Cardiac septum (tissue), 1 donor: ENCODE measurements at regions of chr2 and their contacts with region 1.

Region 1: GRCh38 chr2:221517696-221518151 is 54.4 kb downstream of the EPHA4 start:
- DNase-seq: peak; percentile 75

Region 2: DNA sequence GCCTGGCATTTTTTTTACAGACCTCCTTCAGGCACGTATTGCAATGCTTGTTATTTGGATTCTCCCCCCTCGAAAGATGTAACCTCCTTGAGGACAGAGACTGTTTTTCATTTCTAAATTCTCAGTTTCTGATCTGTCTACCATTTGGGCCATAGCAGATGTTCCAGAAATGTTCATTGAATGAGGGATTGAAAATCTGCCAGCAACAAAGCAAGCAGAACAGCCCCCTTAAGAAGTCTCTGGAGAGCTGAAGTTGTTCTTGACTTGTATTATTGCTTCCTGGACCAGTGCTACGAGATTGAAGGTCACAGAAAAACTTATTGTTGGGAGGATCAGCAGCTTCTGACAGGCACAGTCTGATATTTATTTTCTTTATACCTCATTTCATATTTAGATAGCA is 301.1 kb before region 1 on chr2:
- intact Hi-C with region 1: no loop called
- DNase-seq: no peak

Region 3: DNA sequence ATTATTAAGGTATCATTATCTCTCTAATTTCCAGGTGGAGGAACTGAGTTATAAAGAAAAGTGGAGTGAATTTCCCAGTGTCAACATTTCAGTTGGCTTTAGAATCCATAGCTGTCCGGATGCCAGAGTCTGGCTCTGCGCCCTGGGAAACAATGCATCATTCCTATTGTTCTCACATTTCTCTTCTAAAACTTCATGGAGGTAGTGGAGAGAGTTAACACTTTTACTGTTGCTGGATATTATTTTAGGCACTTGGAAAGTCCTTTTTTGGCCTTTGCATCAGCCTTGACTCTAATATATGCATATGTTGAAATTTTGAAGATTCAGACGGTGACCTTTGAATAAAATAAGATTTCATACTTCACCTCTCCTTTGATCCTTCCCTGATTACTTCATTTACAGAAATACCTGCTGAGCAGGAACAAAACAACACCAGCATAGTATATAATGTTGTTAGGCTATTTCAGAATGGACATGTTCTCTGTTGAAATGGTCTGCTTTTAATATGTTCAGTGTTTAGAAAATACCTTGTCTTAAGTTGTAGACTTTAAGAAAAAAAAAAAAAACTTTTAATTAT is 94.4 kb before region 1 on chr2:
- intact Hi-C with region 1: loop called (anchors 5 kb)
- DNase-seq: no peak

Region 4: GRCh38 chr2:221554769-221555493 is 37.2 kb after region 1 on chr2:
- intact Hi-C with region 1: no loop called
- DNase-seq: no peak

Region 5: DNA sequence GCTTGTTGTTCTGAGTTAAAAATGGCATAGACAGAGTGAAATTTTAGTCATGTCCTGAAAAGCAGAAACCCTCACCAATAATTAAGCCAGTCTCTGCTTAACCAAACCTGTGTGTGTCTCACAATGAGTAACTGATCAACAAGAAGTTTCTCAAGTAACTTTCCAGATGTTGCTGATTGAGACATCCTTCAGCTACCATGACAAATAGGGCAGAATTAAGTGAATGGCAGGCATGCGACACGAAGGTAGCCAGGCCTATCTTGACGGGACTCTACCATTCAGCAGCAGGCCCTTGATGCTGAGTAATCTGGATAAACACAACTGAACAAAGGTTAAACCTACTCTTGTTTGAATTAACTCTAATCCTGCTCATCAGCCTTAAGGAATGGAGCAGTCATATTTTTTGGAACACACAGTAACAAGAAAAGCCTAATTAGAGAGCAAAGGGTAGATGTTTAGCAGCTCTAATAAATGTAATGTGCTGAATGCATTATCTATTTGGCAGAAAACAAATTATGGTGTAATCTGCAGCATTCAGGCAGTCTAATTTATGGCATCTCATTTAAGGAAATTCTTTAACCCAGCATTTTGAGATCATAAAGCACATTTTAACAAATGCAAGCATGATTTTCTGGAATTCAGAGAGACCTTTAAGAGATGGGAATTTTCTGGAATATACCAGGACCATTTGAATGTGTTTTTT is 213.9 kb after region 1 on chr2:
- intact Hi-C with region 1: no loop called
- DNase-seq: no peak